GM10248 (cell line): ENCODE measurements at regions of chr9 and their contacts with region 1.

Region 1: DNA sequence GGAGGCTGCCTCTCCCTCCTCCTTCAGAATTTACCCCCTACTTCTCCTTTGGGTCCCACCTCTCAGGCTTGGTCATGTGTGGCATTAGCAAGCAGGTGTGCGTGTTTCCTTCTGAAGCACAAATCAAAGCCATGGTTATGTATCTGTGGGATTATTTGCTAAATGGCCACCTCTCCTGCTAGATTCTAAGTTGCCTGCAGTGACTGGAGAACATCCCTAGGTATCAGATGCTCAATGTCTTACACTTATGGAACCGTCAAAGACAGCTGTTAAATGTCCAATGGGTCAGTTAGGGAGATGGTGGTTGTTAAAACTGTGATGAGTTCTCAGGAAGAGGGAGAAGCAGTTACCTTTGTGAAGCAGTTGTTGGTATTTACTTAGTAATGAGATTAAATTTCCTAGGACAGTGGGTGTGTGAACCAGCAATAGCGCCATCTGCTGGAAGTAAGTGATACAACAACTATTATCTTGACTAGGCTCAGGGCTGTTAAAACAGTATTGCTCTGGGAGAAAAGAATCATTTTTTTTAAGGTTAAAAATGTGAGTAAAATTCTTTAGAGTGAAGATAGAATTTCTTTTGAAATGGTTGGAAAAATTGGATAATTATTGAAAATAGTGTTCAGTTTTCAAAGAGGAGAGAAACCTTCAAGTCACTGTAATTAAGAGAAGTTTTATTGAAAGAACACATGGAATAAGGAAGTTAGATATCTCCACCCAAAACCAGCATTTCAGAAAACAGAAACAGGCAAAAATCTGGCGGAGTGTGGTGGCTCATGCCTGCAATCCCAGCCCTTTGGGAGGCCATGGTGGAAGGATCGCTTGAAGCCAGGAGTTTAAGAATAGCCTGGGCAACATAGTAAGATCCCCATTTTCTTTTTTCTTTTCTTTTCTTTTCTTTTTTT is 71.3 kb downstream of the TMC1 start:
- DNase-seq: peak; percentile 50
- CTCF ChIP-seq: peak; percentile 65

Region 2: DNA sequence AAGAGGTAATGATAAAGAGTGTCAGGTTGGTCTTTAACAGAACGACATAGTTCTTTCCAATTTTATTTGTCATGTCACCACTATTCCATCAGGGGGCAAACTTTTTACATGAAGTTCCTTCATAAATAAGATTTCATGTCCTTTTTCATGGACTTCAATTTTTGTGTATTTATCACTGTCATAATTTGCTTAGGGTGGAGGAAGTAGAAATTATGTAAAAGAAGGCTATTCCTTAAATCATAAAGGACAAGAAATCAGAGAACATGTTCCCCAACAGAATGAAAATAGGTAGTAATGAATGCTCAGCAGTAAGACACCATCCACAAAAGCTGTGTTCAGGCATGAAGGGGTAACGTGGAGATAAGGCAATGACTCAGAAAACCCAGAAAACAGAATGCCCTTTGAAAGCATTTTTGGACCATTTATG is 300.5 kb before region 1 on chr9:
- CTCF ChIA-PET with region 1: interaction called, 15 read pairs
- POLR2A ChIA-PET with region 1: no interaction called
- DNase-seq: peak; percentile 43
- CTCF ChIP-seq: peak; percentile 56

Region 3: GRCh38 chr9:72577212-72577753 is 15.5 kb before region 1 on chr9:
- CTCF ChIA-PET with region 1: interaction called, 64 read pairs
- POLR2A ChIA-PET with region 1: no interaction called
- DNase-seq: no peak
- CTCF ChIP-seq: no peak

Region 4: DNA sequence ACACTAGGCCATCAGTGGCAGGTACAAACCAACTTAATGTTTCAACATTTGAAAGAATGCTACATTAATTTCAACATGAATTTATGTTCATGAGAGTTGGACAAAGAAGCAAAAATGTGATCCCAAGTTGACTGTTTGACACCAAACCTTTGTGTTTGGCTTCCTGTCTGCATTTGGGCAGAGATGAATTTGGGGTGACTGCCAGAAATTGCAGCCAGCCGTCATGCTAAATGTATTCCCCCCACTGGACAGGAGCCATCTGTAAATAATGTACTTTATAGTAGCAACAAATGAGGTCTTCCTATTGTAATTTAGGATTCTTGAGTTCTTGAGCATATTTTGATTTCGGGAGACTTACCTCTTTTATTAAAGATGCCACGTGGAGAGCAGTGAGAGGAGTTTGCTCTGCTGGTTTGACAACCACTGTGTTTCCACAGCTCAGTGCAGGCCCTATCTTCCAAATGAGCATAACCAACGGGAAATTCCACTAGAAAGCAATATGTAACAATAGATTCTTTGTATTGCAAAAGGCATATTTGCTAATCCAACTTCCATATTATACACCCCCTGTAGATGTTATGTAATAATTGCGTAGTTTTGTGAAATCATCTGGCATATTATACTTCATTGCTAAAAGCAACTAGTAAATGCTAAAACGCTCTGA is 332.5 kb after region 1 on chr9:
- CTCF ChIA-PET with region 1: no interaction called
- POLR2A ChIA-PET with region 1: no interaction called
- DNase-seq: no peak
- CTCF ChIP-seq: no peak

Region 5: GRCh38 chr9:73039271-73040263 is 446.8 kb after region 1 on chr9:
- CTCF ChIA-PET with region 1: no interaction called
- POLR2A ChIA-PET with region 1: no interaction called
- DNase-seq: no peak
- CTCF ChIP-seq: no peak

Region 6: GRCh38 chr9:73133921-73134407 is 541.2 kb after region 1 on chr9:
- CTCF ChIA-PET with region 1: no interaction called
- POLR2A ChIA-PET with region 1: no interaction called
- DNase-seq: no peak
- CTCF ChIP-seq: no peak